HepG2 (cell line): ENCODE measurements at regions of chr6 and their contacts with region 1.

Region 1: GRCh38 chr6:130020907-130021629 is 2.7 kb downstream of the L3MBTL3 start:
- DNase-seq: peak; percentile 81
- ATAC-seq: peak; percentile 85
- H3K4me3 ChIP-seq: peak overlapping the region; percentile 54 to 78 (median 62)
- H3K27ac ChIP-seq: no peak overlapping the region
- H3K4me1 ChIP-seq: peaks cover 5% of the 10 kb centered on the region; the same call in 1 of the 2 replicates
- H3K27me3 ChIP-seq: peaks cover 0 to 38% of the 10 kb centered on the region in 2 experiments; a peak in 3 of 5 replicates
- CTCF ChIP-seq: peak; percentile 93
- EP300 ChIP-seq: 0 out of 4 replicates have a peak, but pooled peaks of 1 of the 2 experiments have one; percentile 29
- POLR2A ChIP-seq: no peak
- RAD21 ChIP-seq: peak; percentile 74

Region 2: DNA sequence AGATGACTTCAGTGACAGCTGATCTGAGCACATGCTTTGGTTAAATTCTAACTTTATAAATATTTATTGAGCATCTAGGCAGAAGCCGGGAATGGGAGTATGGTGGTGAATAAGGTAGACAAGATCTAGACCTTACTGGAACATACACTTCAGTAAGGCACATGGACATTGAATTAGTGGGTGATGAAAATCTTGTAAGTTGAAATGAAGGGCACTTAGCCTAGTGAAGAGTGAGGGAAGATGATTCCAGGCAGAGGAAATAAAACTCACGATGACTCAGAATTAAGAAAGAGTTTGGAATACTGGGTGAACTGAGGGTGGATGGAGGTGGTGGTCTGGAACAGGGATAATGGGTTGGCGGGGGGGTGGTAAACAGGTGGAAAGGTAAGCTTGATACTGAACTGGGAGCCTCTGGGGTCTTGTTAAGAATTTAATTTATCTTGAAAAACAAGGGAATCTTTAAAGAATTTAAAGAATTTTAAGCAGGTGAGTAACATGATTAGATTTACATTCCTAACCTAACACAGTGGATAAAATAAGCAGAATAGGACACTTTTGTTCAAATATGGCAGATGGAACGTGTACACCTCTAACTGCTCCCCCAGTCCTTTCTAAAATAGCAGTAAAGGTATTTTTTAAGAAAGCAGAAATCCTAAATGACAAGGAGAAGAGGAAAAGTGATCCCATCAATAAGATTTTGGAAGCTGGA is 235.9 kb before region 1 on chr6:
- CTCF ChIA-PET with region 1: no interaction called
- POLR2A ChIA-PET with region 1: no interaction called
- in situ Hi-C with region 1: loop called (anchors 10 kb)
- intact Hi-C with region 1: no loop called
- DNase-seq: no peak
- ATAC-seq: no peak
- H3K4me3 ChIP-seq: no peak overlapping the region
- H3K27ac ChIP-seq: no peak overlapping the region
- H3K4me1 ChIP-seq: no peaks in the 10 kb centered on the region
- H3K27me3 ChIP-seq: peaks cover 0 to 6% of the 10 kb centered on the region in 2 experiments; a peak in 1 of 5 replicates
- CTCF ChIP-seq: no peak
- EP300 ChIP-seq: no peak
- POLR2A ChIP-seq: no peak
- RAD21 ChIP-seq: no peak

Region 3: GRCh38 chr6:129943637-129944271 is 77.3 kb before region 1 on chr6:
- CTCF ChIA-PET with region 1: no interaction called
- POLR2A ChIA-PET with region 1: no interaction called
- in situ Hi-C with region 1: no loop called
- intact Hi-C with region 1: loop called (anchors 5 kb)
- DNase-seq: no peak
- ATAC-seq: peak; percentile 75
- H3K4me3 ChIP-seq: no peak overlapping the region
- H3K27ac ChIP-seq: no peak overlapping the region
- H3K4me1 ChIP-seq: no peaks in the 10 kb centered on the region
- H3K27me3 ChIP-seq: peaks cover 0 to 18% of the 10 kb centered on the region in 2 experiments; a peak in 3 of 5 replicates
- CTCF ChIP-seq: no peak
- EP300 ChIP-seq: no peak
- POLR2A ChIP-seq: no peak
- RAD21 ChIP-seq: no peak